Transverse colon (tissue), 4 donors: ENCODE measurements at regions of chr7 and their contacts with region 1.

Region 1: DNA sequence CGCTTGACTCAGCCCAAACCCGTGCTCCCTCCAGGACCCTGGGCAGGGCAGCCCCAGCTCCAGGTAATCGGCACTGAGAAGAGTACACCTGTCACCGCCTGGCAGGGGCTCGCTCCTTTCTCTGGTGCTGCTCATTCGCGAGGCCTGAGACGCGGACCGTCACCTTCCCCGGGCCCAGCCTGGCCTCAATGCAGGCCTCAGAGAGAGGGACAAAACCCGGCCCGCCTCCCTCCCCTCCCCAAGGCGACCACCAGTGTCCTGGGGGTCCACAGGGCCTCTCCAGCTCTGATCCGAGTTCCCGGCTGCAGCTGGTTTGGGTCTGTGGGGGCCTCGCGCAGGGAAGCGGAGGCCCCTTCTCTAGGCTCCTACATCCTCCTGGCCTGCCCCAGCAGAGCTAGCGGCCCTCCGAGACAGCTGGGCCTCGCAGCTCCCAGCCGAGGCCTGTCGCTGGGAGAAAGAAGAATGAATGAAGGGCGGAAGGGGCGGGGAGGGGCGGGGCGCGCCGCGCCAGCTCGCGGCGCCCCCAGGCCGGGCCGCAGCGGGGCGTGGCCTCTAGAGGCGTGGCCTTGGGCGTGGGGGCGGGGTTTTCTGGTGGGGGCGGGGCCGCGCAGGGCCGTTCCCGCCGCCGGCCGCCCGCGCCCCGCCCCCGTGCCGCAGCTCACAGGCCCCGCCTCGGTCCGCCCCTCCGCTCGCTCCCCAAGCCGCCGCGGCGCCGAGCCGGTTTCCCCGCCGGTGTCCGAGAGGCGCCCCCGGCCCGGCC is at the start of gene LIMK1:
- DNase-seq: peak; percentile 86
- H3K4me3 ChIP-seq: peak within 1 kb of the TSS; percentile 75 to 92 (median 87)
- H3K27ac ChIP-seq: peak within 1 kb of the TSS; percentile 50 to 80 (median 77)
- H3K4me1 ChIP-seq: peaks cover 11 to 19% (median 16%) of the 10 kb centered on the region in 4 donors
- H3K27me3 ChIP-seq: no peaks in the 10 kb centered on the region
- CTCF ChIP-seq: no peak
- EP300 ChIP-seq: no peak
- POLR2A ChIP-seq: no peak
- total RNA-seq, gene LIMK1: 13.4 to 44.2 (median 27.1) TPM

Region 2: DNA sequence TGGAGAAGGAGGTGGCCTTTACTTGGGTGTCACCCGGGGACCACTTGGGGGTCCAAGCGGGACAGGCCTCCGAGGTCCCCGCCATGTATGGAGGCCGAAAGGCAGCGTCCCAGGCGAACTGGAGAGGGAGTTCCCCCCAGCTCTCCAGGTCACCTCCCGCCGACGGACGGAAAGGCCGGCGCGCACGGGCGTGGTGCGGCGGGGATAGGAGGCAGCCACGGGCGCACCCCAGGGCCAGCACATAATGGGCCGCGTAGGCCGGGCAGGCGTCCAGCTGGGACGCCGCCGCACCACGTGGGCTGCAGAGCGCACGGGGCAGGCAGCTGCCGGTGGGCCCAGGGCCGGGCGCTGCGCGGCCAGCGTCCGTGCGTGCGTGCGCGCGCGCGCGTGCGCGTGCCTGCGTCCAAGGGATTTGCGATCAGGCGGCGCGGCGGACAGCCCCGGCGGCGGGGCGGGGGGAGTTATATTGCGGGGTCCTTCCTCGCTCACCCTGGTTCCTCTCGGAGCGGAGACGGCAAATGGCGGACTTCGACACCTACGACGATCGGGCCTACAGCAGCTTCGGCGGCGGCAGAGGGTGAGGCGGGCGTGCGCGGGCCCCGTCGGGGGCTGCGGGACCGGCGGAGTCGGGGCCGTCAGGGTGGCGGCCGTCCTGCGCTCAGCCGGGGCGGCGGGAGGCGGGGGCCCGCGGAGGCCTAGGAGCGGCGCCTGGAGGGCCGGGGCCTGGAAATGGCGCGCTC is 90.7 kb after region 1 on chr7 and contains the start of gene EIF4H:
- in situ Hi-C with region 1: loop called in 1 of 4 experiments (anchors 25 kb)
- intact Hi-C with region 1: no loop called
- DNase-seq: peak; percentile 98
- H3K4me3 ChIP-seq: peak within 1 kb of the TSS; percentile 73 to 98 (median 90)
- H3K27ac ChIP-seq: peak within 1 kb of the TSS; percentile 95 to 98 (median 97)
- H3K4me1 ChIP-seq: peaks cover 27 to 57% (median 48%) of the 10 kb centered on the region in 4 donors
- H3K27me3 ChIP-seq: no peaks in the 10 kb centered on the region
- CTCF ChIP-seq: no peak
- EP300 ChIP-seq: no peak
- POLR2A ChIP-seq: peak; percentile 80
- total RNA-seq, gene EIF4H: 175 to 250 (median 213) TPM